Activated CD4-positive, alpha-beta memory T cell treated with anti-CD3 and anti-CD28 coated beads for 36 hours (primary cell): ENCODE measurements at regions of chr3 and their contacts with region 1.

Region 1: DNA sequence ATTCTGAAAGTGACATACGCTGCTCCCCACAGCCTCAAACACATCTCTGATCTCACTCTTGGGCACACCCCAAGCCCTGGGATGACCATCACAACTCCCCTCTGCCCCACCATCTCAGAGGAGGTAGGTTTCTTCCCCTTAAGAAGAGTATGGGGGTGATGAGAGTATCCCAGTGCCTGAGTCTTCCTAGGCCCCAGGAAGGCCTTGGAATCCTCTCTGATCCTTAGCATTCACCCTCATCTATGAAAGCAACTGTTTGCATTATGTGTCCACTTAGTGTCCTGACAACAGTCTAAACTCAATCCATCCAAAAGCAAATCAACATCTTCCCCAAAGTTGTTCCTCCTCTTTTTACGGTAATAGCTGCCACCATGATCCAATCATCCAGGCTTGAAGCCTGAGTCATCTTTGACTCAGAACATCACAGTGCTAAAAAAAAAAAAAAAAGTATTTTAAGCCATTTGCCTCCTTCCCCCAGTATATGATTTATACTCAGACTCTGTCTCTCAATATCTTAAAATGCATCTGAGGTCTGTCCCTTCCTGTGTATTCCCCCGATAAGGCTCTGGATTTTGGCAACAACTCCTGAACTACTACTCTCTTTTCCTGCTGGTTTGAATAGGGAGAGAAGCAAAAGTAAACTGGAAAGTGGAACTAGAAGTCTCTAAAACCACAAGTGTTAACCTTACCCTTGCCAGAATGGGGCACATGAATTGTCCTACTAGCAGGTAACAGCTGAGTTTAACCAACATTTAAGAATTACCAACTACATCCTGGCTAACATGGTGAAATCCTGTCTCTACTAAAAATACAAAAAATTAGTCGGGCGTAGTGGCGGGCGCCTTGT is 22.5 kb downstream of the POPDC2 start:
- DNase-seq: no peak
- H3K4me3 Mint-ChIP-seq: no peak overlapping the region
- H3K27ac Mint-ChIP-seq: peak overlapping the region; percentile 92
- H3K4me1 Mint-ChIP-seq: peaks cover 45% of the 10 kb centered on the region
- H3K27me3 Mint-ChIP-seq: no peaks in the 10 kb centered on the region

Region 2: DNA sequence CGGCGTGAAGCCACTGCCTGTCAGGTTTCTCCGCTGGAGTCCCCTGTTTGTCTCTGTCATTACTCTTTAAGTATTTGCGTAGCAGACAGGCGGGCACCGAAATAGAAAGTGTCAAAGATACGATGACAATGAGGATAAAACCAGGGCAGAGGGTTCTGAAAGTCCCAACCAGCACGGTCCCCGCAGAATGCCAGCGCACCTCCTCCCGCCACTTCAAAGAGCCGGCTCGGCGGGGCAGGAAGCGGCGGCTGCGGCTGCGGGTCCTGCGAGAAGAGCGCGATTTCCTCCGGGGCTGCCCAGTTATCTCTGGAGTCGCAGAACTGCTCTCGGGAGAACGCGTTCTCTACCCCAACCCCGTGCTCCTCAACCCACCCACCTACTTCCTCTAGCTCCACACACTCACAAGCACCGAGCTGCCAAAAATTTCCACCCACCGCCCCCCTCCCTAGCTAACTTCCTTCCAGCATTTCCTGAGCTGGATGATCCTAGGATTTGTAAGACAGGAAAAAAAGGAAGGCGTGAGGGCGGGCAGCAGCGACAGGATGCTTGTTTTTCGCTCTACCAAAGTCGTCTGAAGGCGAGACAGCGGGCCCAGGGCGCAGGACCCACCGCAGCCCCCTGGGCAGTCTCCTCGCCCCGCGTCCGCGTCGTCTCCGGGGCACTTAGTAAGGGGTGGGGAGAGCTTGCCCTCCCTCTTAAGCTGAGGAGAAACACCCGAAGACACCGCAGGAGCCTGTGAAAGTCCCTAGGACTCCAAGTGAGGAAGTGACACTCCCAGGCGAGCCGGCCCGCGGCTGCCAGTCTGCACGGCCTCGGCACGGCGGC is 343.8 kb before region 1 on chr3 and contains the start of gene ARHGAP31:
- CTCF ChIA-PET with region 1: no interaction called
- POLR2A ChIA-PET with region 1: interaction called, 4 read pairs
- intact Hi-C with region 1: loop called (anchors 1 kb)
- DNase-seq: peak; percentile 95
- H3K4me3 Mint-ChIP-seq: peak within 1 kb of the TSS; percentile 83
- H3K27ac Mint-ChIP-seq: peak within 1 kb of the TSS; percentile 93
- H3K4me1 Mint-ChIP-seq: peaks cover 44% of the 10 kb centered on the region
- H3K27me3 Mint-ChIP-seq: no peaks in the 10 kb centered on the region
- total RNA-seq, gene ARHGAP31: 10.8 to 11.4 TPM

Region 3: GRCh38 chr3:119469381-119470189 is 168.3 kb before region 1 on chr3:
- CTCF ChIA-PET with region 1: no interaction called
- POLR2A ChIA-PET with region 1: no interaction called
- intact Hi-C with region 1: loop called (anchors 1 kb)
- DNase-seq: no peak
- H3K4me3 Mint-ChIP-seq: peak overlapping the region; percentile 95
- H3K27ac Mint-ChIP-seq: peak overlapping the region; percentile 92
- H3K4me1 Mint-ChIP-seq: peaks cover 29% of the 10 kb centered on the region
- H3K27me3 Mint-ChIP-seq: no peaks in the 10 kb centered on the region

Region 4: DNA sequence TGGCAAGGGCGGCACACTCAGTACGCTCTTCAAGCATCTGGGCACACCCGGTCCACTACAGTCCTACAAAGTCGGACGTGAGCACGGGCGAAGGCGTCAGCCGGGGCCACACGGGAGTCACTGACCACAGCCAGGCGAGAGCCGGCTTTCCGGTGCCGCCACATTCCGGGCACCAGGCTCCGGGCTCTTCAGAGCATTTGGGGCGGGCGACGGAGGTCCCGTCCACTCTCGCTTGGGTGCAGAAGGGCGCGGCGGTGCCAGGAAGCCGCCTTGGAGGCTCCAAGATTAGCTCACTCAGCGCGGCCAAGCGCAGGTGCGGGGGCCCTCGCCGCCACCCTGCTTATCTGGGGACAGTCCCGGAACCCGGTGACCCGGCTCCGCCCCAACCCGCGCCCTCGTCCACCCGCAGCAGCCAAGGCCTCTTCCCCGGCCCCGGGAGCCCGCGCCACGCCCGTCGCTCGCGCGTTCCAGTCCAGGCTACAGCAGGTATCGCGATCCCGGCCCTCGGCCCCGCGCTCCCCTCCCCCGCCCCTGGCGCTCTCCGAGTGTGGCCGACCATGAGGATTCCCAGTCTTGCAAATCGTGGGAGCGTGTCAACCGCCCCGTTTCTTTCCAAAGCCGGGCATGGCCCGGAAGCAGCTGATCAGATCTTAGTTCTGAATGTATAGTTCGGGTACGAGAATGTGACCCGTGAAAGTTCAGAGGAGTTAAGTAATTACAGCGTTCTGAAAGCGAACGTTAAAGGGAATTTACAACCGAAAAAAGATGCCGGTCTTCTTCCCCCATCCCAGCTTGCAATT is 58.3 kb before region 1 on chr3 and contains the start of gene ADPRH:
- CTCF ChIA-PET with region 1: no interaction called
- POLR2A ChIA-PET with region 1: no interaction called
- intact Hi-C with region 1: loop called (anchors 2 kb)
- DNase-seq: peak; percentile 77
- H3K4me3 Mint-ChIP-seq: peak within 1 kb of the TSS; percentile 74
- H3K27ac Mint-ChIP-seq: peak within 1 kb of the TSS; percentile 61
- H3K4me1 Mint-ChIP-seq: peaks cover 26% of the 10 kb centered on the region
- H3K27me3 Mint-ChIP-seq: peaks cover 3% of the 10 kb centered on the region
- total RNA-seq, gene ADPRH: 7.7 to 8.6 TPM

Region 5: DNA sequence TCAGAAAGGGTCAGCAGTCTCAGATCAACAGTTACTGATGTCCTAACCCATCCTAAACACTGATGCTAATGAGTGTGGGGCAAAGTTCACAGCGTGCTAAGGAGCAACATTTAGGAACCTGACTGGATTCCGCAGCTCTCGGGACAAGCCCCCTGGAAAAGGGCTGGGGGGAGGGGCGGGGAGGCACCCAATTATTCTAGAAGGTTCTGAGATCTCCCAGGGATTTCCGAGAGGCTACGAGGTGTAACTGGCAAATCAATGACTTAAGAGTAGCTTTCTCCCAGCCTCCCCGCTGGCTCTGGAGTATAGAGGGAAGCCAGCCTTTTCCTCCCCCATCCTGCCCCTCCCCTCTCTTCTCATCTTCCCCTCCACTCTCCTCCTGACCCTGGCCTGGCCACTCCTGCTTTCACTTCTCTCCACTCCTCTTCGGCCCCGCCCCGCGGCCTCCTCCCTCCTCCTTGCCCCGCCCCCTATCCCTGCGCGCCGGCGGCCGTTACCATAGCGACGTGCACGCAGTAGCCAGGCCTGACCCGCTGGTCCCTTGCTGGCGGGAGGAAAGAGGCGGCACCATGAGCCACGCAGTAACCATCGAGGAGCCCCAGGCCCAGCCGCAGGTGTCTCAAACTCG is 64.7 kb after region 1 on chr3 and contains the start of gene CFAP91:
- CTCF ChIA-PET with region 1: no interaction called
- POLR2A ChIA-PET with region 1: no interaction called
- intact Hi-C with region 1: loop called (anchors 1 kb)
- DNase-seq: peak; percentile 92
- H3K4me3 Mint-ChIP-seq: peak within 1 kb of the TSS; percentile 74
- H3K27ac Mint-ChIP-seq: no peak within 1 kb of the TSS
- H3K4me1 Mint-ChIP-seq: peaks cover 43% of the 10 kb centered on the region
- H3K27me3 Mint-ChIP-seq: no peaks in the 10 kb centered on the region
- total RNA-seq, gene CFAP91: 0.29 to 0.31 TPM